ENCODE measurements at regions of chr4 and their contacts with region 1.

Region 1: GRCh38 chr4:94561249-94562024 is 109.7 kb downstream of the PDLIM5 start:
- DNase-seq: no peak
- ATAC-seq: no peak
- H3K4me3 ChIP-seq: no peak overlapping the region
- H3K27ac ChIP-seq: peak overlapping the region; percentile 19
- H3K4me1 ChIP-seq: peaks cover 67% of the 10 kb centered on the region
- H3K27me3 ChIP-seq: no peaks in the 10 kb centered on the region
- CTCF ChIP-seq: no peak
- EP300 ChIP-seq: no peak
- POLR2A ChIP-seq: no peak
- RAD21 ChIP-seq: no peak

Region 2: DNA sequence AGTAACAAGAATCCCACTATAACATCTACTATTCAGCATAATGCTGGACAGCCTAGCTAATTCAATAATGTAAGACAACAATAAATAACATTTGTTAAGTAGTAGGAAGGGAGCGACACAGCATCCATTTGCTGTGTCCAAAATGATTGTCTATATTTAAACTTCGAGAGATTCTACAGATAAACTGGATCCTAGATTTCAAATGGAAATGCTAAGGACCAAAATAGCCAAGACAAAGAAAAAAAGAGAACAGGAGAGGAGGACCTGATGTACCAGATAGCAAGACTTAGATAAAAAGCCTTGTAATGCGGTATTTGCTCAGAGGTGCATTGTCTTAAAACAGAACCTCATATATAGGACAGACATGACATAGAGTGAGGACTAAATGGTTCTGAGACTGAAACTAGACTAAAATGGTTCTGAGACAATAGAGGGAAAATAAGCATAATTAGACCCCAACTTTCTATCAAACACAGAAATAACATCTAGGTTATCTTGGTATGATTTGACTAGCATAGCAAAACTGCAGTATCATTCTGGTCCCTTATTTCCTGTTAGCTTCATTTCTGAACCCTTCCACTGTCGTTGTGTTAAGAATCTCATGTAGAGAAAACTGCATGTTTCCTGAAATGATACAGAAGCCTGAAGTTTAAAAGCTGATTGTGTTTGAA is 222.6 kb before region 1 on chr4:
- CTCF ChIA-PET with region 1: no interaction called
- POLR2A ChIA-PET with region 1: no interaction called
- in situ Hi-C with region 1: no loop called
- intact Hi-C with region 1: no loop called
- DNase-seq: no peak
- ATAC-seq: no peak
- H3K4me3 ChIP-seq: no peak overlapping the region
- H3K27ac ChIP-seq: no peak overlapping the region
- H3K4me1 ChIP-seq: no peaks in the 10 kb centered on the region
- H3K27me3 ChIP-seq: no peaks in the 10 kb centered on the region
- CTCF ChIP-seq: no peak
- EP300 ChIP-seq: no peak
- POLR2A ChIP-seq: no peak
- RAD21 ChIP-seq: no peak

Region 3: DNA sequence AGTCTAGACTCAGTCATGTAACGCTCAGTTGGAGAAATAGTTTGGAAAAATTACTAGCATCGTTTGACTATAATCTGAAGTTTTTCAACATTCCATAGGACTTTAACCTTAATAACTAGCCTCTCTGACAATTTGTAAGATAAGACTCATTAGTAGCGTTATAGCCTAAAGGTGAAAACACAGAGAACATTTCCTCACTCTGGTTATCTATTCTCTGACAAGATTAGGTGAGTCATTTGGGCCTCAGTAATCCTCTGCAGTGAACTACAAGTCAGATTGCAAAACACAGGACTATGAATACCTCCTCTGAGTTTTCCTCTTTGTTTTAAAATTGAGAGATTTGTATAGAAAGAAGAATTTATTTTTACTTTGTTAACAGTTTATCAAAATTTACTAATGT is 141.5 kb before region 1 on chr4:
- CTCF ChIA-PET with region 1: no interaction called
- POLR2A ChIA-PET with region 1: no interaction called
- in situ Hi-C with region 1: no loop called
- intact Hi-C with region 1: loop called (anchors 10 kb)
- DNase-seq: peak; percentile 76
- ATAC-seq: peak; percentile 98
- H3K4me3 ChIP-seq: no peak overlapping the region; a peak in 1 of 6 replicates
- H3K27ac ChIP-seq: peak overlapping the region; percentile 29
- H3K4me1 ChIP-seq: peaks cover 44% of the 10 kb centered on the region
- H3K27me3 ChIP-seq: no peaks in the 10 kb centered on the region
- CTCF ChIP-seq: no peak
- EP300 ChIP-seq: peak in 1 of 2 experiments; percentile 88; a peak in 2 of 4 replicates
- POLR2A ChIP-seq: no peak
- RAD21 ChIP-seq: no peak

Region 4: GRCh38 chr4:94472056-94472824 is 89.2 kb before region 1 on chr4:
- CTCF ChIA-PET with region 1: no interaction called
- POLR2A ChIA-PET with region 1: no interaction called
- in situ Hi-C with region 1: no loop called
- intact Hi-C with region 1: loop called (anchors 5 kb)
- DNase-seq: peak; percentile 41
- ATAC-seq: peak; percentile 51
- H3K4me3 ChIP-seq: no peak overlapping the region; a peak in 1 of 6 replicates
- H3K27ac ChIP-seq: peak overlapping the region; percentile 71
- H3K4me1 ChIP-seq: peaks cover 82% of the 10 kb centered on the region
- H3K27me3 ChIP-seq: no peaks in the 10 kb centered on the region
- CTCF ChIP-seq: no peak
- EP300 ChIP-seq: no peak
- POLR2A ChIP-seq: no peak
- RAD21 ChIP-seq: no peak